HEK293 (cell line): ENCODE measurements at regions of chr22 and their contacts with region 1.

Region 1: DNA sequence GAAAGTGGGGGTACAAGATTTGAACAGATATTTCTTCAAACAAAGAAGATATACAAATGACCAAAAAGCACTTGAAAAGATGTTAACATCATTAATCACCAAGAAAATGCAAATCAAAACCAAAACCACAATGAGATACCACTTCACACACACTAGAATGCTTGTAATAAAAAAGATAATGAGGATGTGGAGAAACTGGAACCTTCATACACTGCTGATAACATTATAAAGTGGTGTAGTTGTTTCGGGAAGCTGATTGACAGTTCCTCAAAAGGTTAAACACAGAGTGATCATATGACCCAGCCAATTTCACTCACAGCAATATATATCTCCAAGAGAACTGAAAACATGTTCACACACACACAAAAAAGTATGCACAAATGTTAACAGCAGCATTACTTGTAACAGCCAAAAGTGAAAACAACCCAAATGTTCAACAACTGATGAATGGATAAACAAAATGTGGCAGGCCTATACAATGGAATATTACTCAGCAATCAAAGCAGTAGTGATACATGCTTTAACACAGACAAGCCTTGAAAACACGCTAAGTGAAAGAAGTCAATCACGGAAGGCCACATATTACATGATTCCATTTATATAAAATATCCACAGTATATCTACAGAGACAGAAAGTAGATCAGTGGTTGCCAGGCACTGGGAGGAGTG is 15.1 kb downstream of the PITPNB start:
- H3K4me3 ChIP-seq: no peak overlapping the region
- H3K27ac ChIP-seq: no peak overlapping the region
- H3K4me1 ChIP-seq: no peaks in the 10 kb centered on the region
- CTCF ChIP-seq: no peak

Region 2: GRCh38 chr22:27617214-27617881 is 286.6 kb before region 1 on chr22:
- CTCF ChIA-PET with region 1: no interaction called
- POLR2A ChIA-PET with region 1: no interaction called
- H3K4me3 ChIP-seq: no peak overlapping the region
- H3K27ac ChIP-seq: no peak overlapping the region
- H3K4me1 ChIP-seq: no peaks in the 10 kb centered on the region
- CTCF ChIP-seq: no peak

Region 3: GRCh38 chr22:27919222-27919941 is 15.4 kb after region 1 on chr22 and contains the start of gene PITPNB:
- CTCF ChIA-PET with region 1: interaction called, 3 read pairs
- POLR2A ChIA-PET with region 1: interaction called, 10 read pairs
- H3K4me3 ChIP-seq: peak within 1 kb of the TSS; percentile 72
- H3K27ac ChIP-seq: peak within 1 kb of the TSS; percentile 98
- H3K4me1 ChIP-seq: peaks cover 29% of the 10 kb centered on the region
- CTCF ChIP-seq: no peak